PC-3 (cell line): ENCODE measurements at regions of chr9 and their contacts with region 1.

Region 1: DNA sequence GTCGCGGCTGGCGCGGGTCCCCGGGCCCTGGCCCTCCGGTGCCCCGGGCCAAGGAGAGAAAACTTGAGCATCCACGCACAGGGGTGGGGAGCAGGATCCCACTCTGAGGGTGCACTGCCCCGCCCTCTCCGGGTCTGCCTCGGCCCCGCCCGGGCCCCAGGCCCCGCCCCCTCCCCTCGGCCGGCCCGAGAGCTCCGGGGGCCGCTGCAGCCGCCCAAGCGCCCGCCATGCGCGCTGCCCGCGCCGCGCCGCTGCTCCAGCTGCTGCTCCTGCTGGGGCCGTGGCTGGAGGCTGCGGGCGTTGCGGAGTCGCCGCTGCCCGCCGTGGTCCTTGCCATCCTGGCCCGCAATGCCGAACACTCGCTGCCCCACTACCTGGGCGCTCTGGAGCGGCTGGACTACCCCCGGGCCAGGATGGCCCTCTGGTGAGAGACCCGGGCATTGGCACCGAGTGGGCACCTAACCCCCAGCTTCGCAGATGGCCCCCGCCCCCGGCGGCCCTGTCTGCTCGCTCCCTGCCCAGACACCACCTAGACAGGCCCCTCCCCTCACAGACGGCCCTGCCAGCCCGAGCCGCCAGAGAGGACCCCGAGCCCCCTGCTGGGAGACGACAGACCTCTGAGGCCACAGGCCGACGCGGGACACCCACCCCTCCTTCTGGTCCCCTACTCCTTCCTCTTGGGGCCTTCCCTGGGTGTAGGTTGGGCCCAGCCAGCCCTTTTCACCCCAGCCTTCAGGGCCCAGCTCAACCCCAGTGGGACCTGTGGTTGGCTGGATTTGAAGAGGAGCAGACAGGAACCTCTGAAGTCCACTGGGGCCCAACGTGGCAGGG is at the start of gene CERCAM:
- DNase-seq: peak; percentile 36
- ATAC-seq: peak; percentile 80
- H3K4me3 ChIP-seq: peak within 1 kb of the TSS; percentile 86
- H3K27ac ChIP-seq: no peak within 1 kb of the TSS
- H3K4me1 ChIP-seq: peaks cover 15% of the 10 kb centered on the region
- H3K27me3 ChIP-seq: no peaks in the 10 kb centered on the region
- CTCF ChIP-seq: no peak
- total RNA-seq, gene CERCAM: 19.1 and 23.1 TPM in 2 replicates

Region 2: GRCh38 chr9:128438343-128439109 is 17.7 kb after region 1 on chr9:
- CTCF ChIA-PET with region 1: interaction called, 10 read pairs
- POLR2A ChIA-PET with region 1: no interaction called
- intact Hi-C with region 1: no loop called
- DNase-seq: peak; percentile 78
- ATAC-seq: peak; percentile 79
- H3K4me3 ChIP-seq: no peak overlapping the region
- H3K27ac ChIP-seq: no peak overlapping the region
- H3K4me1 ChIP-seq: no peaks in the 10 kb centered on the region
- H3K27me3 ChIP-seq: no peaks in the 10 kb centered on the region
- CTCF ChIP-seq: peak; percentile 81

Region 3: DNA sequence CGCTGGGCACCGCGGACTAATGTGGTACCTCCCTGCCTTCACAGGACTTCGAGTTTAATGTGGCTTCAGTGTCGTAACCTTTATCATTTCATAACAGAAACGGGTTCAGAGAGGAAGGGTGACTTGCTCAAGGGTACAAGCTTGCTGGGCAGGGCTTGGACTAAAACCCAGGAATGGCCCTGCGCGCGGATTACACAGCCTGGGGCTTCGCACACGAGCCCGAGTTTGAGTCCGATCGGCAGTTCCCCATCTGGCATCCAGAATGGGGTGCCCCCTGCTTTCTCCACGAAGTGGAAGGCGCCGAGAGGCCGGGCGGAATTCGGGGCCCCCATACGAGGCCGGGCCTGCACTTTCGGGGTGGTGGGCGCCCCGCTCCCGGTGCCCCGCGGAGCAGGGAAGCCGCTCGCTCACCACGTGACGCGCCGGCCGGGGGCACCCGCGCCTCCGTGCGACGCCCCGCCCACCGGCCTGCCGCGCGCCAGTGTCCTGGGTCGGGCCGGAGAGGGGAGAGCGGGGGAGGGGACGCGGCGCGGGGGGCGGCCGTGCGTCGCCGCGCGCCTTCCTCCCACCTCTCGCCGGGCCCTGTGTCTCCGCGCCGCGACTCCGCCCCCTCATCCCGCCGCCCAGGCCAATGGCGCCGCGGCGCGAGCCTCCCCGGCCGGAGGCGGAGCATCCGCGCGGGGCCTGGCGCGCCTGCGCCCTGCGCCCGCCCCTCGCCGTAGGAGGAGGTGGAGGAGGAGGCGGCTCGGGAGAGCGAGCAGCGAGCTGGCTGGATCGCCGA is 267.8 kb after region 1 on chr9 and contains the start of gene SET:
- CTCF ChIA-PET with region 1: no interaction called
- POLR2A ChIA-PET with region 1: no interaction called
- intact Hi-C with region 1: no loop called
- DNase-seq: peak; percentile 92
- ATAC-seq: peak; percentile 70
- H3K4me3 ChIP-seq: peak within 1 kb of the TSS; percentile 99
- H3K27ac ChIP-seq: peak within 1 kb of the TSS; percentile 52
- H3K4me1 ChIP-seq: peaks cover 41% of the 10 kb centered on the region
- H3K27me3 ChIP-seq: no peaks in the 10 kb centered on the region
- CTCF ChIP-seq: no peak
- total RNA-seq, gene SET: 647 and 709 TPM in 2 replicates